ENCODE measurements at regions of chr4 and their contacts with region 1.

Region 1: GRCh38 chr4:138680989-138681604 is 334.5 kb upstream of the NOCT start:
- DNase-seq: peak; percentile 88
- H3K4me3 Mint-ChIP-seq: no peak overlapping the region
- H3K27ac Mint-ChIP-seq: no peak overlapping the region
- H3K4me1 Mint-ChIP-seq: peaks cover 6% of the 10 kb centered on the region
- H3K27me3 Mint-ChIP-seq: peaks cover 10% of the 10 kb centered on the region
- CTCF ChIP-seq: peak; percentile 78

Region 2: DNA sequence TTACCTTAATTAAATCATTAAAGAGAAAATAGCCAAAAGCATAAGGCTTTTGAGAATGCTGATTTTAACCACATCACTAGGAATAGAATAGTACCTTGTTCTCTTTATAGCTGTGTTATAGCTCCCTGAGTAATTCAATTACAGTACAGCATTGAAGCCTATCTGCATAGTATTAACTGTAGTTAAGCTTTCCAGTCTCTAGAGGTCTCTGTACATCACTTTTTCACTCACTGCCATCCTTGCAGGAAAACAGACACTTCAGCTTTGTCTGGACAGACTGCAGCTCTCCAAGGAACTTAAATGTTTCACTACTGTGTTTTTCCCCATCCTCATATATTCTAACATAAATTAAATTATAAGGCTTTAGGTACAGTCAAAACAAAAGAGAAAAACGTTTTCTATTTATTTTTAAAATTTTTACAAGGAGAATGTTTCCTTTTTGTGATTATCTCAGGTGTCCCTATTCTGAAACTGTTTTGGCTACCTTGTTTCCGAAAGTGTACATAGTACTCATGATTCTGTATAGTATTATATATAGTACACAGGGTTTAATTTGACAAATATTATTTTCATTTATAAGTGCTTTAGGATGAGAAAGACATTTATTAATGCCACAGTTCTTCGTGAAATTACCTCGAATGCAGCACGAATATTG is 1556.7 kb before region 1 on chr4:
- CTCF ChIA-PET with region 1: interaction called, 16 read pairs
- POLR2A ChIA-PET with region 1: no interaction called
- intact Hi-C with region 1: loop called (anchors 5 kb)
- DNase-seq: peak; percentile 77
- H3K4me3 Mint-ChIP-seq: peak overlapping the region; percentile 72
- H3K27ac Mint-ChIP-seq: peak overlapping the region; percentile 41
- H3K4me1 Mint-ChIP-seq: peaks cover 5% of the 10 kb centered on the region
- H3K27me3 Mint-ChIP-seq: no peaks in the 10 kb centered on the region
- CTCF ChIP-seq: peak; percentile 60

Region 3: GRCh38 chr4:137819964-137820383 is 861.1 kb before region 1 on chr4:
- CTCF ChIA-PET with region 1: interaction called, 36 read pairs
- POLR2A ChIA-PET with region 1: no interaction called
- intact Hi-C with region 1: loop called (anchors 1 kb)
- DNase-seq: peak; percentile 80
- H3K4me3 Mint-ChIP-seq: no peak overlapping the region
- H3K27ac Mint-ChIP-seq: no peak overlapping the region
- H3K4me1 Mint-ChIP-seq: peaks cover 12% of the 10 kb centered on the region
- H3K27me3 Mint-ChIP-seq: no peaks in the 10 kb centered on the region
- CTCF ChIP-seq: peak; percentile 78

Region 4: GRCh38 chr4:138494931-138495330 is 186.2 kb before region 1 on chr4:
- CTCF ChIA-PET with region 1: no interaction called
- POLR2A ChIA-PET with region 1: no interaction called
- intact Hi-C with region 1: loop called (anchors 2 kb)
- DNase-seq: peak; percentile 60
- H3K4me3 Mint-ChIP-seq: no peak overlapping the region
- H3K27ac Mint-ChIP-seq: no peak overlapping the region
- H3K4me1 Mint-ChIP-seq: no peaks in the 10 kb centered on the region
- H3K27me3 Mint-ChIP-seq: no peaks in the 10 kb centered on the region
- CTCF ChIP-seq: peak; percentile 41

Region 5: DNA sequence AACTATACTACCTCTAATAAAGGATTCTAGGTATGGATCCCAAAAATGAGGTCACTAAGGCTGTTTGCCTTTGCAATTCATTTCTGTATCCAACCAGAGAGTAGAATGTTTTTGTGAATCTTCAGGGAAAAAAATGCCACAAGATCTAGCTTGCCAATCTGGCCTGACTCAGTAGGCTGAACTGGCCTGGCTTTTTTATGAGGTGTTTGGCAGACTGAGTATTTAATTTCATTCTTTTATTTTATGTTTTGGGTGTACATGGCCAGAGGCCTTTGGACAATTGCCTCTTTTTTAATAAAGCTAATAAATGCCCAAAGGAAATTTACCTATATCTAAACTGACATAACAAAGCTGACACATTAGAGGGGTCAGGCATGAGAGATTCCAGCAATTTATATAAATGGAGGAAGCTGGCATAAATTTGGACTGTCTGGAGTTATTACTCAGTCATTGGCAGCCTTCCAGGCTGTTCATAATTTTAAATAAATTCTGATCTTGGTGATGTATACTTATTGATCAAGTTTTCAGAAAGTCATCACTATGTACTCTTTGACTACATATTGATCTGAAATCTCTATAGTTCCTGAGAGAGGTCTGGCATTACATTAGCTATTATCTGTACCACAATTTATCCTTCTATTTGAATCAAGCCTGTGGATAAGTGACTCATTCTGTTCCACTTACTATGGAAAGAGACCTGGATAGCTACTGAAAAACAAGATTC is 41.9 kb before region 1 on chr4:
- CTCF ChIA-PET with region 1: interaction called, 10 read pairs
- POLR2A ChIA-PET with region 1: no interaction called
- intact Hi-C with region 1: no loop called
- DNase-seq: peak; percentile 24
- H3K4me3 Mint-ChIP-seq: no peak overlapping the region
- H3K27ac Mint-ChIP-seq: no peak overlapping the region
- H3K4me1 Mint-ChIP-seq: peaks cover 9% of the 10 kb centered on the region
- H3K27me3 Mint-ChIP-seq: no peaks in the 10 kb centered on the region
- CTCF ChIP-seq: no peak

Region 6: GRCh38 chr4:138669479-138670315 is 11.4 kb before region 1 on chr4:
- CTCF ChIA-PET with region 1: interaction called, 19 read pairs
- POLR2A ChIA-PET with region 1: no interaction called
- intact Hi-C with region 1: no loop called
- DNase-seq: peak; percentile 11
- H3K4me3 Mint-ChIP-seq: no peak overlapping the region
- H3K27ac Mint-ChIP-seq: no peak overlapping the region
- H3K4me1 Mint-ChIP-seq: no peaks in the 10 kb centered on the region
- H3K27me3 Mint-ChIP-seq: no peaks in the 10 kb centered on the region
- CTCF ChIP-seq: no peak

Region 7: DNA sequence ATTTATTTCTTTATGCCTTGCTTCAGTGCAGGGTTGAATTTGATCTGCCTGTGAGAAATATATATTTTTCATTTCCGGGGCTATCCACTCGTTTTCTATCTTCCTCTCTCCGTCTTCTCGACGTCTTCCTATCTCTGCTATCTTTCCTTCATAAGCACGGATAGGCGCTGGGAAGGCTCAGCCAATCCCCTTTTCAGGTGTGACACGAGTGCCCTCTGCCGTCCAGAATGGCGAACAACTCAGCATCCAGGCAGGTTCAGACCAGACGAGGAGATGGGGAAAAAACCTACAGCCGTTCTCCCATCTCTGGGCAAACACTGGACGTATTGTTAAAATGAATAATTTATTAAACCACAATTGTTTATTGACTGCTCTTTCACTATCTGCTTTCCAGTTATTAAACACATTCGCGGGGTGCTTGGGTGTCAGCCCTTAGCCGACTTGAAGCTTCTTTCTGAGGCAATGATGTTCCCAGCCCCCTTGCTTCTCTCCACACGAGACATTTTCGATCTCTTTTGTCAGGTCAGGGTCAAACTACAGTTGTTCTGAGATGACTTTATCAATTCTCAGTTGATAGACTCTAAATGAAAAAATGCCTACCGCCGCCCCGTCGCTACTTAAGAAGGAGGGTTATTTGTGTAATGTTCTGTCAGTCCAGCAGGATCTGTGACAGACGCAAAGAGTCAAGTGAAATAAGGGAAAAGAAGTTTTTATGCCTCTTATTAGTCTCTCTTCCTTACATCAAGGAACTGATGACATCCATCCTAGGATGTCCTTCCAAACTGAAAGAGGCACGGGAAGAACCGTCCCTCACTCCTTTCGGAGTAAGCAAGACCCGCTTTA is 238.2 kb after region 1 on chr4:
- CTCF ChIA-PET with region 1: interaction called, 8 read pairs
- POLR2A ChIA-PET with region 1: no interaction called
- intact Hi-C with region 1: loop called (anchors 1 kb)
- DNase-seq: peak; percentile 85
- H3K4me3 Mint-ChIP-seq: no peak overlapping the region
- H3K27ac Mint-ChIP-seq: no peak overlapping the region
- H3K4me1 Mint-ChIP-seq: peaks cover 7% of the 10 kb centered on the region
- H3K27me3 Mint-ChIP-seq: no peaks in the 10 kb centered on the region
- CTCF ChIP-seq: peak; percentile 71